ENCODE measurements at regions of chr4 and their contacts with region 1.

Region 1: GRCh38 chr4:130563185-130563888 is 1467.4 kb downstream of the C4orf33 start:
- DNase-seq: peak; percentile 7 to 70
- ATAC-seq: peak; percentile 98
- H3K4me3 ChIP-seq: peak overlapping the region; percentile 42
- H3K27ac ChIP-seq: peak overlapping the region; percentile 42 to 57; a peak in 2 of 6 replicates
- H3K4me1 ChIP-seq: no peaks in the 10 kb centered on the region
- CTCF ChIP-seq: peak; percentile 44
- EP300 ChIP-seq: no peak
- POLR2A ChIP-seq: no peak
- RAD21 ChIP-seq: peak; percentile 66 to 68

Region 2: GRCh38 chr4:130257271-130257670 is 306.1 kb before region 1 on chr4:
- CTCF ChIA-PET with region 1: no interaction called
- POLR2A ChIA-PET with region 1: no interaction called
- DNase-seq: peak in 1 of 2 experiments; percentile 18
- ATAC-seq: no peak; a peak in 1 of 6 replicates
- H3K4me3 ChIP-seq: no peak overlapping the region
- H3K27ac ChIP-seq: no peak overlapping the region
- H3K4me1 ChIP-seq: no peaks in the 10 kb centered on the region
- CTCF ChIP-seq: no peak
- EP300 ChIP-seq: no peak
- POLR2A ChIP-seq: no peak
- RAD21 ChIP-seq: no peak

Region 3: DNA sequence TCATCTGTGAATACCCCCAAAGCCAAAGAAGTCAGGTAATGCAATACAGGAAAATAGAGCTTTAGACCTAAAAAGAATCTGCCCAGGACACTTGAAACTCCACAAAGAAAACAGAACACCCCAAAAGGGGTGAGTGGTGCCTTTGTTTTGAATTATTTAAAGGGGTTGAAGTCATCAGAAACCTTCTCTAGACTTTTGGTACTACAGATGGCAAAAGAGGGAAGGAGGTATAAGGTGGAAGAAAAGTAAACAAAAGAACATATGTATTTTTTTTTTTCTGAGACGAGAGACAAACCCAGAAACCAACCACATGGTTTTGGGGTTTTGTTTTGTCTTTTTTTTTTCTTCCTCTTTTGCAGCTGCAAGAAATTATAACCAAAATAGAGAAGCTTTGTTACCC is 10.4 kb after region 1 on chr4:
- CTCF ChIA-PET with region 1: interaction called, 11 read pairs
- POLR2A ChIA-PET with region 1: no interaction called
- DNase-seq: no peak
- ATAC-seq: no peak
- H3K4me3 ChIP-seq: no peak overlapping the region
- H3K27ac ChIP-seq: no peak overlapping the region
- H3K4me1 ChIP-seq: no peaks in the 10 kb centered on the region
- CTCF ChIP-seq: no peak
- EP300 ChIP-seq: no peak
- POLR2A ChIP-seq: no peak
- RAD21 ChIP-seq: no peak

Region 4: GRCh38 chr4:130808492-130808891 is 245.2 kb after region 1 on chr4:
- CTCF ChIA-PET with region 1: interaction called, 15 read pairs
- POLR2A ChIA-PET with region 1: no interaction called
- DNase-seq: peak in 1 of 2 experiments; percentile 3
- ATAC-seq: no peak
- H3K4me3 ChIP-seq: no peak overlapping the region
- H3K27ac ChIP-seq: no peak overlapping the region
- H3K4me1 ChIP-seq: no peaks in the 10 kb centered on the region
- CTCF ChIP-seq: peak; percentile 24; the same call in 1 of the 3 replicates
- EP300 ChIP-seq: no peak
- POLR2A ChIP-seq: no peak
- RAD21 ChIP-seq: peak in 1 of 2 experiments; percentile 25; a peak in 1 of 5 replicates

Region 5: GRCh38 chr4:130825284-130825683 is 261.9 kb after region 1 on chr4:
- CTCF ChIA-PET with region 1: no interaction called
- POLR2A ChIA-PET with region 1: no interaction called
- DNase-seq: no peak
- ATAC-seq: no peak
- H3K4me3 ChIP-seq: no peak overlapping the region
- H3K27ac ChIP-seq: no peak overlapping the region
- H3K4me1 ChIP-seq: no peaks in the 10 kb centered on the region
- CTCF ChIP-seq: no peak
- EP300 ChIP-seq: no peak
- POLR2A ChIP-seq: no peak
- RAD21 ChIP-seq: no peak

Measured in A549 (cell line).